HepG2 (cell line): ENCODE measurements at regions of chr5 and their contacts with region 1.

Region 1: DNA sequence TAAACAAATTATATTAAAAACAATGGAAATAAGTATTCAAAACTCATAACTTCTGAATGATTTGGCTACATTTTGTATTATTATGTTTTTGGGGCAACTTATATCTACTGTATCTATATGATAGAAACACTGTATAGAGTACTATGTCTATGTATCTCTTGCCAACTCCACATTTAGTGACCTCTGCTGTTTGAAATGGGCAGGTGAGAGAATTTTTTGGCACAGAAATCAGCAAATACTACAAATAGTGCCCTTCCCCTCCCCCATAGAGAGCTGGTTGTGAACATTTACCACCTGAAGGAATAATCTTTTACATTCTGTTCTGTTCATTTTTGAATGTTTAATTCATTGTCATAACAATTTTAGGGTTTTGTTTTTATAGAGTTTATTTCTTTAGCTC is 545.3 kb downstream of the PDE4D start:
- DNase-seq: peak; percentile 36
- ATAC-seq: peak; percentile 60; the same call in 2 of the 3 replicates
- H3K4me3 ChIP-seq: no peak overlapping the region
- H3K27ac ChIP-seq: no peak overlapping the region
- H3K4me1 ChIP-seq: no peaks in the 10 kb centered on the region
- H3K27me3 ChIP-seq: no peaks in the 10 kb centered on the region
- CTCF ChIP-seq: peak; percentile 42
- EP300 ChIP-seq: no peak
- POLR2A ChIP-seq: no peak
- RAD21 ChIP-seq: no peak

Region 2: DNA sequence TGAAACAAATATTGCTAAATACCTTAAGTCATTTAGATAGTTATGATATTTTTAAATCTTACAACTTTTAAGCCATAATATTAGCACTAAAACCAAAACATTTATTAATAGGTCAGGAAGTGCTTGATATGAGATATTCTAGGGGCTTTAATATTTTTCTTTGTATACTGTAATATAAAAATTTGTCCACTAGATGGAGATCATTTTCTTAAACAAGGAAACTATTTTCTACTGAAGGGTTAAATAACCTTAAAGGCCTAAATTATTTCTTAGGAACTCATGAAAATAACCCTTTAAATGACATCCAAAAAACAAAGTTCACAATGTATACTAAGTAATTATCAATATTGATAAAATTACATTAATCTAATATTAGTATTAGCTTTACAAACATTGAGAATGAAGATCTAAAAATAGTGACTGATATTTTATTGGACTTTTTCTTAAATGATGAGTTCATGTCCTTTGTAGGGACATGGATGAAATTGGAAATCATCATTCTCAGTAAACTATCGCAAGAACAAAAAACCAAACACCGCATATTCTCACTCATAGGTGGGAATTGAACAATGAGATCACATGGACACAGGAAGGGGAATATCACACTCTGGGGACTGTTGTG is 129.7 kb before region 1 on chr5:
- CTCF ChIA-PET with region 1: no interaction called
- POLR2A ChIA-PET with region 1: no interaction called
- in situ Hi-C with region 1: loop called (anchors 10 kb)
- intact Hi-C with region 1: no loop called
- DNase-seq: peak; percentile 8
- ATAC-seq: no peak
- H3K4me3 ChIP-seq: no peak overlapping the region
- H3K27ac ChIP-seq: no peak overlapping the region
- H3K4me1 ChIP-seq: peaks cover 24% of the 10 kb centered on the region
- H3K27me3 ChIP-seq: no peaks in the 10 kb centered on the region
- CTCF ChIP-seq: no peak
- EP300 ChIP-seq: no peak
- POLR2A ChIP-seq: no peak
- RAD21 ChIP-seq: no peak

Region 3: DNA sequence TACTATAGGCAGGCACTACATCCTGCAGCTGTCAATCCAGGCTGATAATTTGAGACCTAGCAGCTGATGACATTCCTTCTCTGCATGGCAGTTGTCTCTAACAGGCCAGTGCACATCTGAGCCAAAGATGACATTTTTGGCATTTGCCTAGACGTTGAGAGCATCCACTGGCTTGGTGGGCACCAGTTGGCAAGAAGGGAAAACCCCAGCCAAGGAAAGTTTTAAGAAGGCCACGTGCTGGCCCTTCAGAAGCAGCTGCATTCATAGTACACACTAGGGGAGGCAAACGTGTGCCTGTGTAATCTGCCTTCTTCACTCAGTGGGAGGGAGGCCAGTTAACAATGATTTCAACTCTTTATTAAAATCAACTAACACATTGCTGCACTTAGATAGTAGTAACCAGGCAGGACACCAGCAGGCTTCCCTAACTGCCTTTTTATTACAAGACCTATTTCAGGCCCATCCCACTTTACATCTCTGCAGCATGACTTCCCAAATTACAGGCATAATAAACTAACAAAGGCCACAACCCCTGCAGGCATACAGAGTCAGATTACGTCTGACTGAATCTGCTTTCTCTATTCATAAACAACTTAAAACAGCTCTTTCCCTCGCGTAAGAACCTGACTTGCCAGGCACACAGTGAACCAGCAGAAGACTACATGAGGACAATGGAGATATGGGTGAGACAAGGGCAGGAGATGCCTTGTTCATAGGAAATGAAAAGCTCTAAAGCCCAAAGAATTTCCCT is 31.0 kb before region 1 on chr5:
- CTCF ChIA-PET with region 1: no interaction called
- POLR2A ChIA-PET with region 1: no interaction called
- in situ Hi-C with region 1: no loop called
- intact Hi-C with region 1: no loop called
- DNase-seq: no peak
- ATAC-seq: no peak
- H3K4me3 ChIP-seq: no peak overlapping the region
- H3K27ac ChIP-seq: no peak overlapping the region
- H3K4me1 ChIP-seq: no peaks in the 10 kb centered on the region
- H3K27me3 ChIP-seq: no peaks in the 10 kb centered on the region
- CTCF ChIP-seq: no peak
- EP300 ChIP-seq: no peak
- POLR2A ChIP-seq: no peak
- RAD21 ChIP-seq: no peak

Region 4: DNA sequence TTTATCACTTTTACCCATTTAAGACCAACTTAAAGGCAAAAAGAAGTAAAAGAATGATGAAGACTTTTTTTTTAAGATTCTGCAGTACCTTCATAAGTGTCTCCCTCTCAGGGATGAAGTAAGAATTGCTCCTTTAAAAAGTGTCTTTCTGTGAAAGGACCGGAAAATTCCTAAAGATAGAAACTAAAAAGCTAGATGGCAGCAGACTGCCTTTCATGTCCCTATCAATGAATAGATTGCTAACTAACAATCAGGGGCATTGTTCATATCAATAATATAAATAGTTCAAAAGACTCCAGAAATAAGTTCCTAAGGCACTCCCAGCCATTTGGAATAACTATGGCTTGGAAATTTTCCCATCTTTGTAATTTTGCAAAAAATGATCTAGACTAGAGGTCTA is 12.6 kb before region 1 on chr5:
- CTCF ChIA-PET with region 1: no interaction called
- POLR2A ChIA-PET with region 1: no interaction called
- in situ Hi-C with region 1: no loop called
- intact Hi-C with region 1: no loop called
- DNase-seq: no peak
- ATAC-seq: no peak
- H3K4me3 ChIP-seq: no peak overlapping the region
- H3K27ac ChIP-seq: no peak overlapping the region
- H3K4me1 ChIP-seq: no peaks in the 10 kb centered on the region
- H3K27me3 ChIP-seq: no peaks in the 10 kb centered on the region
- CTCF ChIP-seq: no peak
- EP300 ChIP-seq: no peak
- POLR2A ChIP-seq: no peak
- RAD21 ChIP-seq: no peak

Region 5: GRCh38 chr5:59660737-59661136 is 312.6 kb after region 1 on chr5:
- CTCF ChIA-PET with region 1: no interaction called
- POLR2A ChIA-PET with region 1: no interaction called
- in situ Hi-C with region 1: no loop called
- intact Hi-C with region 1: no loop called
- DNase-seq: no peak
- ATAC-seq: no peak
- H3K4me3 ChIP-seq: no peak overlapping the region
- H3K27ac ChIP-seq: no peak overlapping the region
- H3K4me1 ChIP-seq: peaks cover 25% of the 10 kb centered on the region
- H3K27me3 ChIP-seq: no peaks in the 10 kb centered on the region
- CTCF ChIP-seq: no peak
- EP300 ChIP-seq: no peak
- POLR2A ChIP-seq: no peak
- RAD21 ChIP-seq: no peak